ENCODE measurements at regions of chr12 and their contacts with region 1.

Region 1: GRCh38 chr12:25436203-25437030 is 116.7 kb downstream of the LMNTD1 start:
- DNase-seq: peak; percentile 81
- H3K4me3 Mint-ChIP-seq: peak overlapping the region; percentile 32
- H3K27ac Mint-ChIP-seq: peak overlapping the region; percentile 65
- H3K4me1 Mint-ChIP-seq: peaks cover 15% of the 10 kb centered on the region
- H3K27me3 Mint-ChIP-seq: no peaks in the 10 kb centered on the region
- CTCF ChIP-seq: peak; percentile 78

Region 2: GRCh38 chr12:25557830-25558436 is 121.5 kb after region 1 on chr12:
- CTCF ChIA-PET with region 1: interaction called, 6 read pairs
- POLR2A ChIA-PET with region 1: no interaction called
- intact Hi-C with region 1: loop called (anchors 5 kb)
- DNase-seq: peak; percentile 64
- H3K4me3 Mint-ChIP-seq: no peak overlapping the region
- H3K27ac Mint-ChIP-seq: peak overlapping the region; percentile 42
- H3K4me1 Mint-ChIP-seq: peaks cover 9% of the 10 kb centered on the region
- H3K27me3 Mint-ChIP-seq: no peaks in the 10 kb centered on the region
- CTCF ChIP-seq: peak; percentile 56

Region 3: GRCh38 chr12:25677232-25677937 is 241.0 kb after region 1 on chr12:
- CTCF ChIA-PET with region 1: interaction called, 3 read pairs
- POLR2A ChIA-PET with region 1: no interaction called
- intact Hi-C with region 1: loop called (anchors 10 kb)
- DNase-seq: peak; percentile 7
- H3K4me3 Mint-ChIP-seq: no peak overlapping the region
- H3K27ac Mint-ChIP-seq: no peak overlapping the region
- H3K4me1 Mint-ChIP-seq: peaks cover 3% of the 10 kb centered on the region
- H3K27me3 Mint-ChIP-seq: no peaks in the 10 kb centered on the region
- CTCF ChIP-seq: peak; percentile 23

Region 4: GRCh38 chr12:26119391-26119981 is 683.1 kb after region 1 on chr12:
- CTCF ChIA-PET with region 1: no interaction called
- POLR2A ChIA-PET with region 1: no interaction called
- intact Hi-C with region 1: loop called (anchors 1 kb)
- DNase-seq: peak; percentile 64
- H3K4me3 Mint-ChIP-seq: no peak overlapping the region
- H3K27ac Mint-ChIP-seq: no peak overlapping the region
- H3K4me1 Mint-ChIP-seq: peaks cover 22% of the 10 kb centered on the region
- H3K27me3 Mint-ChIP-seq: peaks cover 4% of the 10 kb centered on the region
- CTCF ChIP-seq: peak; percentile 63